ENCODE measurements at regions of chr1 and their contacts with region 1.

Region 1: DNA sequence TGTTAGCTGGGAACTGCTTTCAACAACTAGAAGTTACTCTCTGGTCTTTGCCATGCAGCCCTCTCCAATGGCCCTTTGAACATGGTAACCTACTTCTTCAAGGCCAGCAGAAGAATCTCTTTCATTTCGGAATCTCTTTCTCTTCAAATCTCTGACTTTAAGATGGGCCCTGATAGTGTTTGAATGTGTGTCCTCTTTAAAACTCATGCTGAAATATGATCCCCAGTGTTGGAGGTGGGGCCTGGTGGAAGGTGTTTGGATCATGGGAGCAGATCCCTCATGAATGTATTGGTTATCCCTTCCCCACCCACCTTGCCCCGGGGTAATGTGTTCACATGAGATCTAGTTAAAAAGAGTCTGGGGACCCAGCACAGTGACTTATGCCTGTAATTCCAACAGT is 54.5 kb upstream of the SOX13 start:
- DNase-seq: no peak
- H3K4me3 ChIP-seq: no peak overlapping the region
- H3K4me3 Mint-ChIP-seq: no peak overlapping the region
- H3K27ac ChIP-seq: no peak overlapping the region
- H3K27ac Mint-ChIP-seq: peak overlapping the region in 1 of 8 donors; percentile 28
- H3K4me1 ChIP-seq: no peaks in the 10 kb centered on the region
- H3K4me1 Mint-ChIP-seq: no peaks in the 10 kb centered on the region
- H3K27me3 ChIP-seq: no peaks in the 10 kb centered on the region
- H3K27me3 Mint-ChIP-seq: peaks cover under 1 to 6% of the 10 kb centered on the region in 2 donors

Region 2: GRCh38 chr1:203985044-203985443 is 33.4 kb before region 1 on chr1:
- CTCF ChIA-PET with region 1: no interaction called
- POLR2A ChIA-PET with region 1: no interaction called
- DNase-seq: no peak
- H3K4me3 ChIP-seq: no peak overlapping the region
- H3K4me3 Mint-ChIP-seq: no peak overlapping the region
- H3K27ac ChIP-seq: no peak overlapping the region
- H3K27ac Mint-ChIP-seq: no peak overlapping the region
- H3K4me1 ChIP-seq: no peaks in the 10 kb centered on the region
- H3K4me1 Mint-ChIP-seq: no peaks in the 10 kb centered on the region
- H3K27me3 ChIP-seq: no peaks in the 10 kb centered on the region
- H3K27me3 Mint-ChIP-seq: peaks cover 5 to 21% of the 10 kb centered on the region in 2 donors

Region 3: DNA sequence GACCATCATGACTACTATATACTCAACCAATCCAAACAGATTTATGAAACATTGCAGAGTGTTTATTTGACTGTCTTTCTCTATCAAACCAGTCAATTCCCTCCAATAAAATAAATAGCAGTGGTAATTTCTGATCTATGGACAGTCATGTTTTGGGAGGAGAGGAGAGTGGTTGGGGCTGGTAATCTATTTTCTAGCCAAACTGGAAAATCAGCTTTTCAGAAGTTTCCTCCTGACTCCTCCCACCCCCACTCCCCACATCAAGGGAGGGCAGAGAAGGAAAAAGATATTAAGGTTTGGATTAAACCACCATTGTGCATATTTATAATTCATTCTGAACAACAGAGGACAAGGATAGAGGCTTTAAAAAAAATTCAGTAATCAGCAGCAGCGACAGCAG is 14.9 kb before region 1 on chr1:
- CTCF ChIA-PET with region 1: no interaction called
- POLR2A ChIA-PET with region 1: no interaction called
- DNase-seq: no peak
- H3K4me3 ChIP-seq: no peak overlapping the region
- H3K4me3 Mint-ChIP-seq: no peak overlapping the region
- H3K27ac ChIP-seq: no peak overlapping the region
- H3K27ac Mint-ChIP-seq: no peak overlapping the region
- H3K4me1 ChIP-seq: no peaks in the 10 kb centered on the region
- H3K4me1 Mint-ChIP-seq: peaks cover 6 to 12% (median 6%) of the 10 kb centered on the region in 3 donors
- H3K27me3 ChIP-seq: no peaks in the 10 kb centered on the region
- H3K27me3 Mint-ChIP-seq: peaks cover 4 to 15% of the 10 kb centered on the region in 2 donors

Region 4: GRCh38 chr1:204598319-204598969 is 580.0 kb after region 1 on chr1:
- CTCF ChIA-PET with region 1: no interaction called
- POLR2A ChIA-PET with region 1: interaction called, 16 read pairs
- DNase-seq: no peak
- H3K4me3 ChIP-seq: no peak overlapping the region
- H3K4me3 Mint-ChIP-seq: no peak overlapping the region
- H3K27ac ChIP-seq: no peak overlapping the region
- H3K27ac Mint-ChIP-seq: peak overlapping the region in 1 of 8 donors; percentile 10
- H3K4me1 ChIP-seq: no peaks in the 10 kb centered on the region
- H3K4me1 Mint-ChIP-seq: no peaks in the 10 kb centered on the region
- H3K27me3 ChIP-seq: no peaks in the 10 kb centered on the region
- H3K27me3 Mint-ChIP-seq: no peaks in the 10 kb centered on the region

Measured in CD8-positive, alpha-beta memory T cell (primary cell).